ENCODE measurements at regions of chr20 and their contacts with region 1.

Region 1: DNA sequence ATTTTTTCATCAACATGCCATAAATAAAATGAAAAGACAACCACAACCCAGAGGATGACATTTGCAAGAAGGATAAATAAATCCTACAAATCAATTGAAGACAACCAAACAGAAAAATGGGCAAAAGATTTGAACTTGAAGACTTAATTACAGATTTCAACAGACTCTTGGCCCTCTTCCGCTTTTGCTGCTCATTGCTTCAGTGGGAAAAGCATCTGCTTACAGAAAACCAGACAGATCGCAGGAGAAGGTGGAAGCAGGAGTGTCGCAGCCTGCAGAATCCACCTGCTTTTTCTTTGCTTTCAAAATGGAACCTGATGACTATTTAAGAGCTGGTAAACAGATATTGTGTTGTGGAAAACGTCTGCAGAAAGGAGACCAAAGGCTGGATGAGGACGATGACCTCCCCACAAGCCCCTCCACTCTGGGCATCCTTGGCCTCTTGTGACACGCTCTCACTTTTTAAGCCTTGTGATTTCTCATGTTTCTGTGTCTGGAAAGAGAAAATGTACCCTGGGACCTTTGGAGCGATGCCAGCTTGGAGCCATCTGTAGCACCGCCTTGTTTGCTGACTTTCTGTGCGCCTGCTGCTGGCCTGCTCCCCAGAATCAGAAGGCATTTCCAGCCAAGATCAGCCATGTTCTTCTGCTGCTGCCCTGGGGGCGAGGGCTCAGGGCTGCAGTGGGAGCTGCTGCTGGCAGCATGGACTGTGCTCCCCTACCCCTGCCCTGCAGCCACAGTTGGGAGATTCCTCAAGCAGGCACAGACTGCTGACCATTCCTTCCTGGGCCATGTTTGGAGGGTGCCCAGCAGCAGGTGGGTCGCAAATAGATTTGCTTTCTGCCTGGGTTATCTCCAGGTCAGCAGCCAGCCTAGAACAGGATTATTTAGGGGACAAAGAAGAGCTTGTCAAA is 3.6 kb upstream of the CSTL1 start:
- DNase-seq: no peak
- ATAC-seq: no peak
- H3K4me3 ChIP-seq: no peak overlapping the region
- H3K4me3 Mint-ChIP-seq: no peak overlapping the region
- H3K27ac ChIP-seq: no peak overlapping the region
- H3K27ac Mint-ChIP-seq: no peak overlapping the region
- H3K4me1 ChIP-seq: no peaks in the 10 kb centered on the region
- H3K4me1 Mint-ChIP-seq: no peaks in the 10 kb centered on the region
- H3K27me3 ChIP-seq: no peaks in the 10 kb centered on the region
- H3K27me3 Mint-ChIP-seq: no peaks in the 10 kb centered on the region
- CTCF ChIP-seq: no peak

Region 2: GRCh38 chr20:23420943-23421931 is 14.6 kb before region 1 on chr20 and contains the start of gene NAPB:
- CTCF ChIA-PET with region 1: interaction called, 50 read pairs
- POLR2A ChIA-PET with region 1: no interaction called
- intact Hi-C with region 1: no loop called
- DNase-seq: peak; percentile 85 to 95 (median 93)
- ATAC-seq: peak; percentile 98
- H3K4me3 ChIP-seq: peak within 1 kb of the TSS; percentile 85 to 96
- H3K4me3 Mint-ChIP-seq: peak within 1 kb of the TSS; percentile 87
- H3K27ac ChIP-seq: peak within 1 kb of the TSS; percentile 71 to 76
- H3K27ac Mint-ChIP-seq: peak within 1 kb of the TSS; percentile 89
- H3K4me1 ChIP-seq: peaks cover 23% of the 10 kb centered on the region
- H3K4me1 Mint-ChIP-seq: peaks cover 67% of the 10 kb centered on the region
- H3K27me3 ChIP-seq: peaks cover 0 to 4% of the 10 kb centered on the region in 2 experiments
- H3K27me3 Mint-ChIP-seq: no peaks in the 10 kb centered on the region
- CTCF ChIP-seq: peak; percentile 21
- total RNA-seq, gene NAPB: 10.9 to 11.7 TPM

Region 3: GRCh38 chr20:23680146-23680545 is 244.3 kb after region 1 on chr20:
- CTCF ChIA-PET with region 1: no interaction called
- POLR2A ChIA-PET with region 1: no interaction called
- intact Hi-C with region 1: no loop called
- DNase-seq: no peak
- ATAC-seq: no peak
- H3K4me3 ChIP-seq: no peak overlapping the region
- H3K4me3 Mint-ChIP-seq: no peak overlapping the region
- H3K27ac ChIP-seq: no peak overlapping the region
- H3K27ac Mint-ChIP-seq: no peak overlapping the region
- H3K4me1 ChIP-seq: no peaks in the 10 kb centered on the region
- H3K4me1 Mint-ChIP-seq: no peaks in the 10 kb centered on the region
- H3K27me3 ChIP-seq: no peaks in the 10 kb centered on the region
- H3K27me3 Mint-ChIP-seq: peaks cover 16% of the 10 kb centered on the region
- CTCF ChIP-seq: no peak

Region 4: DNA sequence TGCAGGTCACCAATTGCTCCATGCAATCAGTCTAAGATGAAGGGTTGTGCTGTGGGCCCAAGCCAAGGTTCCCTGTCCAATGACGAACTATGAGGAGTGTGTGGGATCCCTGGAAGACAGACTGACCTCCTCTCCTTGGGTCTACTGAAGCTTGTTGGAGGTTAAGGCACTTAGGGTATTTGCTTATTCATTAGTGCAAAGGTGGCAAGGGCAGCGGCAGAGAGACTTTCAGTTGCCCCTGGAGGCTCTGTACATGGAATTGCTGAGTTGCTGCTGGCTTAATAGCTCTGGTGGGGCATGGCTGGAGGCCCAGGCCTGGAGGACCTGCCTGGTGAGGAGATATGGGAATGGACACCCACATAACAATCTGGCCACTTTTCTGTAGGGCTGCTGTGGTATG is 473.5 kb after region 1 on chr20:
- CTCF ChIA-PET with region 1: no interaction called
- POLR2A ChIA-PET with region 1: no interaction called
- intact Hi-C with region 1: loop called in 1 of 2 experiments (anchors 5 kb)
- DNase-seq: no peak
- ATAC-seq: no peak
- H3K4me3 ChIP-seq: no peak overlapping the region
- H3K4me3 Mint-ChIP-seq: no peak overlapping the region
- H3K27ac ChIP-seq: no peak overlapping the region
- H3K27ac Mint-ChIP-seq: no peak overlapping the region
- H3K4me1 ChIP-seq: no peaks in the 10 kb centered on the region
- H3K4me1 Mint-ChIP-seq: peaks cover 4% of the 10 kb centered on the region
- H3K27me3 ChIP-seq: no peaks in the 10 kb centered on the region
- H3K27me3 Mint-ChIP-seq: peaks cover 4% of the 10 kb centered on the region
- CTCF ChIP-seq: no peak

Measured in CD8-positive, alpha-beta T cell (primary cell).